BJ (cell line): ENCODE measurements at regions of chr6 and their contacts with region 1.

Region 1: DNA sequence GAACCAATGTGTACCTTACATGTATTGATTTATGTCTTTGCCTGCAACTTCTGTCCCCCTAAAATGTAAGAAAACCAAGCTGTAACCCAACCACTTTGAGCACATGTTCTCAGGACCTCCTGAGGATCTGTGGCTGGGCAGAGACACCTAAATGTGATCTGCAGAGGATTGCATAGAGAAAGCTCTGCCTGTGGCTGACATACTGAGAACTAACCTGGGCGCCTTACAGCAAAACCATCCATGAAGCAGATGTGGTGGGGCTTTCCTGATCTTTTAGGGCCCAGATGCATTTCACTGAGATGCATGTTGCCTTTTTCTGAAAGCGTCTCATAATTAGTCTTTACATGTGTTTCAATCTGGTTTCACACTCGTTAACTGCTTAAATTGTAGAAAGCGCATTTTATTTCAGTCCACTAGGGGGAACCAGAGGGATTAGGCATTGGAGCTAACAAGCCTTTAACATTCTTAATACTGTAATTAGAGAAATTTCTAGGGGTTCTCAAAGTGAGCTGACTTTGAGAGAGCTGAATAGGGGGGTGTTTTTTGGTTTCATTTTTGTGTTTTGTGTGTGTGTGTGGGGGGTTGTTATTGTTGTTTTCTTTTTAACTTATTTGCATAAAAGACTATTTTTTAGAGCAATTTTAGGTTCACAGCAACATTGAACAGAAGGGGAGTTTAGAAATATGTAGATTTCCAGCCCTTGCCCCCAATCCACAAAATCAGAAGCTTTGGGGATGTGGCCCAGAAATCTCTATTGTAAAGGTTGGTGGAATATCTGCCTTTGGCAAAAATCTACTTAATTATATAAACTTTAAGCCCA is 50.9 kb upstream of the FAM184A start:
- DNase-seq: no peak
- H3K4me3 ChIP-seq: no peak overlapping the region
- H3K27me3 ChIP-seq: no peaks in the 10 kb centered on the region
- CTCF ChIP-seq: peak; percentile 82

Region 2: GRCh38 chr6:119067091-119067490 is 62.3 kb before region 1 on chr6:
- CTCF ChIA-PET with region 1: no interaction called
- POLR2A ChIA-PET with region 1: no interaction called
- DNase-seq: no peak
- H3K4me3 ChIP-seq: no peak overlapping the region
- H3K27me3 ChIP-seq: no peaks in the 10 kb centered on the region
- CTCF ChIP-seq: no peak

Region 3: GRCh38 chr6:119078376-119079282 is 50.7 kb before region 1 on chr6 and contains the start of gene FAM184A:
- CTCF ChIA-PET with region 1: no interaction called
- POLR2A ChIA-PET with region 1: interaction called, 10 read pairs
- DNase-seq: no peak
- H3K4me3 ChIP-seq: peak within 1 kb of the TSS; percentile 54
- H3K27me3 ChIP-seq: peaks cover 20% of the 10 kb centered on the region
- CTCF ChIP-seq: peak; percentile 34; the same call in 1 of the 2 replicates
- polyA plus RNA-seq, gene FAM184A: not detected in 2 replicates

Region 4: GRCh38 chr6:119116712-119117281 is 12.6 kb before region 1 on chr6:
- CTCF ChIA-PET with region 1: interaction called, 11 read pairs
- POLR2A ChIA-PET with region 1: no interaction called
- DNase-seq: no peak
- H3K4me3 ChIP-seq: no peak overlapping the region
- H3K27me3 ChIP-seq: no peaks in the 10 kb centered on the region
- CTCF ChIP-seq: no peak

Region 5: DNA sequence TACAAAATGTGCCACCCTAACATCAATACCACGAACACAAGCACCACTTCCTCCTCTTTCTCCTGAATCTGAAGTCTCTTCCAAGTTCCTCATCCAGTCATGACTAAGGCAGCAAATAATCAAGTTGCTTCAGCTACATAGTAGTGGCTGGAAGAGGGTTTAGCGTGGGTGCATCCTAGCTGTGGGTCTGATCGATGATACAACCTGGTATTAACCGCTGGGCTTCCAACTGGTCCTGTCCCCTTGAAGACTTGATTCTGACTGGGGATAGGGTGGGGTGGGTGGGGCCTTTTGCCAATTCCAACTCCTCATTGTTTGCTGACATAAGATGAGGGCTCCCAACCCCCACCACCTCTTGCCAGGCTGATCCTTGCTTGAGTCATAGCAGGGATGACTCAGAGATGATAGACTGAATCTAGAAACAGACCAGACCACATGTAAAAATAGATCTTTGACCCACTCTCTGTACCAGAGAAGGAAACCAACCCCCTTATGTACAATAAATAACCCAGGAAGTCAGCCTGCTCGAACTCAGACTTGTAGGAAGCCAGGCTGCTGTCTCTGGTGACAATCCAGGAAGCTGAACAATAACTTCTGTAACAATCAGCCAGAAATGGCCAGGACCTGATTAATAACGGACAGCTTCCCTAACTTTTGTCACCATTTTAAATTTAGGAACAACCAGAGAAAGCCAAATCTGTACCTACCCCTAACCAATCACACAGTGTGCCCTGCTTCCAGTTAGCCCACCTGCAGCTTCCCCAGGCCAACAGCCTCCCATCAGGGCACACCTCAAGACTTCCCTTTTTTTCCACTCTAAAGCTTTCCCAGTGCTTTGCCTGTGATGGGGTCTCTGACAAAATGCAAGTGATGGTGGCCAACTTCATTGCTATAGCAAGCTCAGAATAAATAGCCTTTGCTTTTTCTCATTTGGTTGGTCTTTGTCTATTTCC is 18.0 kb after region 1 on chr6:
- CTCF ChIA-PET with region 1: interaction called, 14 read pairs
- POLR2A ChIA-PET with region 1: no interaction called
- DNase-seq: peak; percentile 80
- H3K4me3 ChIP-seq: no peak overlapping the region
- H3K27me3 ChIP-seq: no peaks in the 10 kb centered on the region
- CTCF ChIP-seq: no peak

Region 6: DNA sequence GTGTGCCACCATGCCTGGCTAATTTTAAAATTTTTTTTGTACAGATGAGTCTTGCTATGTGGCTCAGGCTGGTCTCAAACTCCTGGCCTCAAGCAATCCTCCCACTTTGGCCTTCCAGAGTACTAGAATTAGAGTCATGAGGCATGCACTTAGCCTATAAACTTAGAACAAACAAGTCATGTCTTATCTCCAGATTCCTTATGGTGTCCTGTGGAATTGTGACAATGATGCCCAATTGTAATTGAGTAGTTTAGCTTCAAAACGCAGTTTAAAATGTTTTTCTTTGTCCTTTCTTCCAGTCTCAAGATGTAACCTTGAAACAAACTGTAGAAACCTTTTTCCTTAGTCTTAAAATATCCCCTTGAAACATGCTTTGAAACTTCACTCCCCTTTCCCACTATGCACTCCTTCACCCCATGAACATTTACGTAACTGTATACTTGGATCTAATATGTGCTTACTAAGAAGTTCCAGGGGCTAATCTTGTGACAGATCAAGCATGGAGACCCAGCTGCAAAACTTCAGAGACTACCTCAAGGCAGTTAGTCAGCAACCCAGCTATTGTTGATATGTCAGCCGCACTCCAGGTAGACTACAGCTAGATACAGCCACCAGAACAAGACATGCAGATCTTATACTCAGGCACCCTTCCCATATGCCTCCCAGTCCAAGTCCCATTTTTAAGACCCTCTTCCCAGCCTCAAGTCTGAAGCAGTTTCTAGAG is 174.0 kb after region 1 on chr6:
- CTCF ChIA-PET with region 1: no interaction called
- POLR2A ChIA-PET with region 1: no interaction called
- DNase-seq: no peak
- H3K4me3 ChIP-seq: no peak overlapping the region
- H3K27me3 ChIP-seq: no peaks in the 10 kb centered on the region
- CTCF ChIP-seq: no peak